ENCODE measurements at regions of chr12 and their contacts with region 1.

Region 1: DNA sequence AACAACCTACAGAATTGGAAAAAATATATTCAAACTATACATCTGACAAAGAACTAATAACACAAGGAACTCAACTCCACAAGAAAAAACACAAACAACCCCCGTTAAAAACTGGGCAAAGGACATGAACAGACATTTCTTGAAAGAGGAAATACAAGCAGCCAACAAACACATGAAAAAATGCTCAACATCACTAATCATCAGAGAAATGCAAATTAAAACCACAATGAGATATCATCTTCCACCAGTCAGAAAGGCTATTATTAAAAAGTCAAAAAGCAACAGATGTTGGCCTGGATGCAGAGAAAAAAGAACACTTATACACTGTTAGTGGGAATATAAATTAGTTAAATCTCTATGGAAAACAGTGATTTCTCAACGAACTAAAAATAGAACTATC is 82.6 kb upstream of the CCDC91 start:
- DNase-seq: no peak
- ATAC-seq: no peak
- H3K4me3 ChIP-seq: no peak overlapping the region
- H3K27ac ChIP-seq: no peak overlapping the region
- H3K4me1 ChIP-seq: no peaks in the 10 kb centered on the region
- H3K27me3 ChIP-seq: no peaks in the 10 kb centered on the region
- CTCF ChIP-seq: no peak
- POLR2A ChIP-seq: no peak

Region 2: DNA sequence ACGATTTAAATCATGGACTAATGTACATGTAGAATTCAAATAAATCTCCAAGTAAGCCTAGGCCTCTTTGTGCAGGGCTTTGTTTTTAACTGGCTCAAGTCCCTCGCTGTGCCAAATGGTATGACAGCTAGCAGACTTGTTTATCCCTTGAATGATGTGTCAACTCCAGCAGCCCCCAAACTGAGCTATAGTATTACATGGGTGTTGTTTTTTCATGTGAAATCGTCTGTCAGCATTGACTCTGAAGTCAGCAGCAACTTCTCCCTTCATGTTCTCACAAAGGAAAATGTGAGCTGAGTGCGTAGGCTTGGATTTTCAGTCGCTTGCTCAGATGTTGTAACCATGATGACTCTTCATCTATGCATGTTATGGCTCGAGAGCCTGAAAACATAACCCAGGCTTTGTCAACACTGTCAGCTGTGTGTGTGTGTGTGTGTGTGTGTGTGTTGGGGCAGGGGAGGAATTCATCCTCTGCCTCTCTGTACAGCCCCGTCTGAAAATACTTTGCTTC is 208.5 kb before region 1 on chr12:
- in situ Hi-C with region 1: no loop called
- intact Hi-C with region 1: no loop called
- DNase-seq: no peak
- ATAC-seq: no peak
- H3K4me3 ChIP-seq: no peak overlapping the region
- H3K27ac ChIP-seq: no peak overlapping the region
- H3K4me1 ChIP-seq: no peaks in the 10 kb centered on the region
- H3K27me3 ChIP-seq: no peaks in the 10 kb centered on the region
- CTCF ChIP-seq: no peak
- POLR2A ChIP-seq: no peak

Region 3: GRCh38 chr12:28065889-28066630 is 41.6 kb before region 1 on chr12:
- in situ Hi-C with region 1: no loop called
- intact Hi-C with region 1: loop called (anchors 2 kb)
- DNase-seq: no peak
- ATAC-seq: no peak
- H3K4me3 ChIP-seq: no peak overlapping the region
- H3K27ac ChIP-seq: no peak overlapping the region
- H3K4me1 ChIP-seq: no peaks in the 10 kb centered on the region
- H3K27me3 ChIP-seq: no peaks in the 10 kb centered on the region
- CTCF ChIP-seq: no peak
- POLR2A ChIP-seq: no peak

Measured in gastrocnemius medialis (tissue), 4 donors.